Head of caudate nucleus (tissue), 42 donors: ENCODE measurements at regions of chr12 and their contacts with region 1.

Region 1: GRCh38 chr12:90978117-90978770 is 23.3 kb upstream of the CCER1 start:
- DNase-seq: peak in 1 of 42 donors; percentile 21

Region 2: GRCh38 chr12:91017511-91018263 is 39.4 kb after region 1 on chr12:
- intact Hi-C with region 1: no loop called
- DNase-seq: no peak

Region 3: GRCh38 chr12:91355150-91356006 is 377.1 kb after region 1 on chr12:
- intact Hi-C with region 1: loop called (anchors 10 kb)
- DNase-seq: peak; percentile 24 to 89 (median 70)